ENCODE measurements at regions of chrX and their contacts with region 1.

Region 1: DNA sequence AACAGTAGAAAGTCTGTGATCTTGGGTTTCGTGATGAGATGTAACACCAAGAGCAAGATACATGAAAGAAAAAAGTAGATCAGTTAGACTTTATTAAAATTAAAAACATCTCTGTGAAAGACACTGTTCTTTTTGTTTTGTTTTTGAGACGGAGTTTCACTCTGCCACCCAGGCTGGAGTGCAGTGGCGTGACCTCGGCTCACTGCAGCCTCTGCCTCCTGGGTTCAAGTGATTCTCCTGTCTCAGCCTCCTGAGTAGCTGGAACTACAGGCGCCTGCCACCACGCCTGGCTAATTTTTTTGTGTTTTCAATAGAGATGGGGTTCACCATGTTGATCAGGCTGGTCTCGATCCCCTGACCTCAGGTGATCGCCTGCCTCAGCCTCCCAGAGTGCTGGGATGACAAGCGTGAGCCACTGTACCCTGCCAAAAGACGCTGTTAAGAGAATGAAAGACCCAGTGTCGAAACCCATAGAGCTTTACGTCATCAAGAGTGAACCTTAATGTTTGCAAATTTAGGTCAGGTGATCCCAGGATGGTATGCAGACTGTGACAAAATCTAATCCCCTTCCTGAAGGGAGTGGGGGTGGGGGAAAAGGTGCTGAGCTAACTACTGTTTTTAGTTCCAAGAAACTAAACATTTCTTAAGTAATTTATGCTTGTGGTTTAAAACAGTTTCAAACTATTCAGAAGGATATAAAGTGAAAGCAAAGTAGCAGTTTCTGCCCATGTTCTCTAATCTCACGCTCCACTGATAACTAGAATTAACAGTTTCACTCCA is 8.0 kb downstream of the OFD1 start:
- DNase-seq: no peak
- ATAC-seq: peak; percentile 58
- H3K4me3 ChIP-seq: no peak overlapping the region
- H3K4me1 ChIP-seq: no peaks in the 10 kb centered on the region
- CTCF ChIP-seq: no peak

Region 2: DNA sequence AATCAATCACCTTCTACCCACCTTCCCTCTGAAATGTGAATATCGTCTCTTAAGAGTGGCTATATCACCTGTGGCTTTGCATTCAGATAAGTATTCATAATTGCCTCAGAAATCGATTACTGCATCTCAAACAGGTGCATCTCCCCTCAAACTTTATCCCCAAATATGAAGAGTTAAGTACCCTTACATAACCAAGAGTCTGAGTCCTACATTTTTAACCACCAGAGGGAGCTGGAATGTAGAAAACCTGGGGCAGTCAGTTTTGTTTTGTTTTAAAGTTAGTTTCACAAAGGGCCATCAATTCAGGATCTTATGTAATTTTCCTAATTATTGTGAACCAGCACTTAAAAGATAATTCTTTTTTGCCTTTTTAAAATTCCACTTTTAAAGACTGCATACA is 84.0 kb before region 1 on chrX:
- intact Hi-C with region 1: loop called in 1 of 2 experiments (anchors 5 kb)
- DNase-seq: peak in 1 of 3 donors; percentile 39
- ATAC-seq: peak; percentile 63
- H3K4me3 ChIP-seq: no peak overlapping the region
- H3K4me1 ChIP-seq: no peaks in the 10 kb centered on the region
- CTCF ChIP-seq: no peak

Measured in mucosa of descending colon (tissue), 3 donors.